ENCODE measurements at regions of chr6 and their contacts with region 1.

Region 1: DNA sequence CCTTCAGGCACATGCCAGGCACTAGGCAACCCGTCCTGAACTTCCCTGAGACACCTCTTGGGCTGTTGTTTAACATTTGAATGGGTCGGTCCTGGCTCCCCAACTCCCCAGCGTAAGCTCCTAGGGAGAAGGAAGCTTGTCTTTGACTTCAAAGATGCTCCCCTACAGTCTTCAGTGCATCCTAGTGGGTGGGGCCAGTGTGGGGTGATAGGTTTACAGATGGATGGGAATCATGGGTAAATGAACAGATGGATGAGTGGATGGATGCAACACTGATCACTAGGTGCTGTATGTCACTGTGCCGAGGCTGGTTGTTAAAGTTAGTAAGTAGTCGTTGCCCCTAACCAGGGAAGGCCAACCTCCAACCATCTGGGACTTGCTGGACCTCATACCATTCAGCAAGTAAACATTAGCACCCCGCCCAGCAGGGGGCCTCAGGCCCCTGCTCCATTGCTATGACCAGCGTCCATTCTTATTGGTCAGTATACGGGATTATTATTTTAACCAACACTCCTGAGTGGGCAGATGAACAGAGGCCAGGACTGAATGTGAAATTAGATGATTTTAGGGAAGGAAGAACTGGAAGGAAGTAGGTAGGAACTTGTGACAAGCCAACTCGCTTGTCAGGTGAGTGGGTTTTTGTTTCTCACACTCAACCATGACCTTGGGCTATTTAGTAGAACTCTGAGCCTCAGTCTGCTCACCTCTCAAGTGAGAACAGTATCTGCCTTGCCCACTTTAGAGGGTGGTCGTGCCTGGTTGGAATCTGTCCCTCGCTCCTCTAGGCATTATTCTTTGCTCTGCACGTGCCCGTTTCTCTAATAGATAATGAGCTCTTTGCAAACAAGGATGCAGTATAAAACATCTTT is 82.9 kb upstream of the FOXP4 start:
- DNase-seq: peak; percentile 83
- H3K4me3 ChIP-seq: no peak overlapping the region
- H3K27ac ChIP-seq: no peak overlapping the region
- H3K4me1 ChIP-seq: no peaks in the 10 kb centered on the region
- H3K27me3 ChIP-seq: peaks cover 7% of the 10 kb centered on the region in 2 experiments
- CTCF ChIP-seq: peak; percentile 80 to 86
- POLR2A ChIP-seq: no peak

Region 2: GRCh38 chr6:41406728-41407489 is 56.4 kb before region 1 on chr6:
- CTCF ChIA-PET with region 1: no interaction called
- POLR2A ChIA-PET with region 1: no interaction called
- dilution Hi-C with region 1: no loop called
- intact Hi-C with region 1: no loop called
- DNase-seq: no peak
- H3K4me3 ChIP-seq: no peak overlapping the region
- H3K27ac ChIP-seq: no peak overlapping the region
- H3K4me1 ChIP-seq: no peaks in the 10 kb centered on the region
- H3K27me3 ChIP-seq: peaks cover 27 to 34% of the 10 kb centered on the region in 2 experiments
- CTCF ChIP-seq: no peak
- POLR2A ChIP-seq: no peak

Region 3: GRCh38 chr6:41551086-41551700 is 87.9 kb after region 1 on chr6:
- CTCF ChIA-PET with region 1: no interaction called
- POLR2A ChIA-PET with region 1: no interaction called
- dilution Hi-C with region 1: no loop called
- intact Hi-C with region 1: loop called (anchors 2 kb)
- DNase-seq: no peak
- H3K4me3 ChIP-seq: no peak overlapping the region
- H3K27ac ChIP-seq: no peak overlapping the region
- H3K4me1 ChIP-seq: peaks cover 8% of the 10 kb centered on the region
- H3K27me3 ChIP-seq: peaks cover 0 to 3% of the 10 kb centered on the region in 2 experiments
- CTCF ChIP-seq: no peak
- POLR2A ChIP-seq: no peak

Region 4: DNA sequence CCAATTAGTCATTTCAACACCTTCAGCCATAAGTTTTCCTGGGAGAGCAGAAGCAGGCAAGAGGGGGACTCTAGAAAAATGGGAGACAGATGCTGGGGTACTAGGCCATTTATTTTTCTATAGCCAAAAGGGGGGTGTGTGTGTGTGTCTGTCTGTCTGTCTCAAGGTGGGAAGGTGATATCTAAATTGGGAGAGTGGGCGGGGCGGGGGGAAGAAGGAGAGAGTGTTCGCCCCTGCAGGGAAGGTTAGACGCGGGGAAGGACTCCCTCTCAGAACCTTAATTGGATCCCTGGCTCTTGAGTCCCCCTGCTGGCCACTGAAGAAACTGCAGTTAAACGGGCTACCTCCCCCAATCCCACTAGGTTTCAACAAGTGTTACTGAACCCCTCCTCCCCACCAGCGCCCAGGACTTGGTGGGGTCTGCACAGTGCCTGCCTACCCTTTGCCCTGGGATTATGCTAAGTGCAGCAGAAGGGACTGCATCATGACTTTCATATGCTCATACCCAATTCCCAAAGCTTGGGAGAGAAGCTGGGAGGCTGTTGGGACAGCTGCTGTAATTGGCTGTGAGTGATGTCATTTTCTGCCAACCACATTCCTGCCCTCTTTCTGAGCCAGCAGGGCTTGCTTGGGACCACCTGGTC is 128.7 kb after region 1 on chr6:
- CTCF ChIA-PET with region 1: interaction called, 46 read pairs
- POLR2A ChIA-PET with region 1: no interaction called
- dilution Hi-C with region 1: no loop called
- intact Hi-C with region 1: loop called (anchors 1 kb)
- DNase-seq: peak; percentile 73
- H3K4me3 ChIP-seq: no peak overlapping the region
- H3K27ac ChIP-seq: no peak overlapping the region
- H3K4me1 ChIP-seq: no peaks in the 10 kb centered on the region
- H3K27me3 ChIP-seq: no peaks in the 10 kb centered on the region
- CTCF ChIP-seq: peak; percentile 89 to 93
- POLR2A ChIP-seq: no peak

Measured in endothelial cell of umbilical vein (primary cell).